Aorta (tissue), 5 donors: ENCODE measurements at regions of chr2 and their contacts with region 1.

Region 1: DNA sequence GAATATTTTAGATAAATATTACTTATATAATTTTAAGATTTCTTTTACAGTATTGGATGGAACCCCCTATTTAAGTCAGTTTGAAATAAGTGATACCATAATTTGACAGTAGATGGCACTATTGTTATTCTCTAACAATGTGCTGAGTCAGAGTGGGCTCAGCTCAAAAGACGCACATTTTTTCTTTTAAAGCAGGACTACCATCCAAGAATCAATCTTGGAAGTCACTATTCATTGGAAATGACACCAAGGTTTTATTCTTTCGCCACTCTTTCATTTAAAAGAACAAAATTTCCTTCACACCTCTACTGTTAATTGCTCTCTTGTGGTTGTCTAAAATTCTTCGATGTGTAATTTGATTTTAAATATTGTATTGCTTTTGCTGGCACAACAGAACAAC is 32.6 kb upstream of the SPAG16 start:
- DNase-seq: no peak
- ATAC-seq: no peak
- H3K4me3 ChIP-seq: no peak overlapping the region
- H3K27ac ChIP-seq: no peak overlapping the region
- H3K4me1 ChIP-seq: no peaks in the 10 kb centered on the region
- H3K27me3 ChIP-seq: no peaks in the 10 kb centered on the region

Region 2: GRCh38 chr2:212692466-212692865 is 559.2 kb before region 1 on chr2:
- intact Hi-C with region 1: loop called in 1 of 2 experiments (anchors 10 kb)
- DNase-seq: no peak
- ATAC-seq: no peak
- H3K4me3 ChIP-seq: no peak overlapping the region
- H3K27ac ChIP-seq: no peak overlapping the region
- H3K4me1 ChIP-seq: no peaks in the 10 kb centered on the region
- H3K27me3 ChIP-seq: no peaks in the 10 kb centered on the region